Endothelial cell of umbilical vein (primary cell): ENCODE measurements at regions of chr2 and their contacts with region 1.

Region 1: DNA sequence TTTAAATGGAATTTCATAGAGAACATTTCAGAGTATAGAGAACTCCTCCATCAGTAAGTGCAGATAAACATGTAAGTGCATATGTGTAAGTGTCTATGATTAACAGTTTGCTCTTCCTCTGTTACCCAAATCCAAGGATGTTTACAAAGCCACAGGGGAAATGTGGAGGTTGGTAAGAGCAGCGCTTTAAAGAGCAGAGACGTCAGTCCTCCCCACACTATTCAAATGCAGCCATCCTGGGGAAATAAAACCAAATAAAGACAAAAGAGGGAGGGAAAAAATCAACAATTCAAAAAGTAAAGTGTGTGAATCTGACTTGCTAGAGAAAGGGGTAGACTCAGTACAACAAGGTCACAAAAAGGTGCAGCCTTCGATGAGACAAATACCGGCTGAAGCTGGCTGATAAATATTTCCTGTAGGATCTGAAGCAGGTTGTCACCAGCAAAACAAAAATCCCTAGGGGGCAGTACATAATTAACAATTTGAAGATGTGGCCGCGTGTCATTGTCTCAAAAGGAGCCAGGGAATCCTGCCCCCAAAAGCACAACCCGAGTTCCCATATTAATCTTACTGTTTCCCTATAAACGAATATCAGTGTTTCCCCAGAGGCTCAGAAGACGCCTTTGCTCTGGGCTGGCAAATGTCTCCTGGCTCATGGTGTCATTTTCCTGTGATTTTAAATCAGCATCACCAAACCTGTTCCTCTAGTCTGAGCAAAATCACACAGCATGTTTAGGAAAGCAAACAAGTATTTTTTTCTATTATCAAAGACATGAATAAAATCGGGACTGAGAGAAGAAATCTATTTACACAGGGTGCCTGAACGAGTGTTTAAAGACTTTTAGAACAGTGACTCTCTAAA is 216.6 kb downstream of the CDCA7 start:
- DNase-seq: peak; percentile 43
- H3K4me3 ChIP-seq: no peak overlapping the region
- H3K27ac ChIP-seq: no peak overlapping the region
- H3K4me1 ChIP-seq: peaks cover 13% of the 10 kb centered on the region
- H3K27me3 ChIP-seq: no peaks in the 10 kb centered on the region
- CTCF ChIP-seq: peak; percentile 5 to 23
- POLR2A ChIP-seq: no peak

Region 2: DNA sequence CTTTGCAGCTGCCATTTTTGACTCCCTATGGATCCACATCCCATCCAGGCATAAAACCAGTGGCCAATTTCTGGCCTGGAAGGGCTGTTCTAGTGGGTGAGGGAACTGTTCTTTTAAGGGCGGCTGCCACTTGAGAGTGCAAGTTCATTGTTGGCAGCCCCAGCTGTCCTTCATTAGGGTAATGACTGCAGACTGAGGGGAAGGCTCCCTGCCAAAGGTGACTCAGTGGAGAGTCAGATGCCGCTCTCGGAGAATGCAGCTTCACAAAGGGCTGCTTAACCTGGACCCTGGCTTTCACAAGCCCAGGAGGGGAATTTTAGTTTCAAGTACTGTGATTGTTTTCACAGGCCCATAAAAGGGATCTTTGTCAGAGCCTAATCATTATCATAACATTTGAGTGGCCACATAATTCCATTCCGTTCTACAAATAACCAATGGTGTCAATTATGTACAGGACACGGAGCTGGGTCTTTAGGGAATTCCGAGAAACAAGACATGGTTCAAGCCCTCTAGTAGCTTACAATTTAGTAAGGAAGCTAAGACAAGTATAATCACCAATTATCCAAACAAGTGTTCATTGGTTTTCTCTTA is 19.1 kb after region 1 on chr2:
- CTCF ChIA-PET with region 1: interaction called, 4 read pairs
- POLR2A ChIA-PET with region 1: no interaction called
- dilution Hi-C with region 1: no loop called
- intact Hi-C with region 1: loop called (anchors 1 kb)
- DNase-seq: peak; percentile 90
- H3K4me3 ChIP-seq: peak overlapping the region in 1 of 3 experiments; percentile 5
- H3K27ac ChIP-seq: peak overlapping the region; percentile 62
- H3K4me1 ChIP-seq: peaks cover 23% of the 10 kb centered on the region
- H3K27me3 ChIP-seq: no peaks in the 10 kb centered on the region
- CTCF ChIP-seq: no peak
- POLR2A ChIP-seq: no peak

Region 3: GRCh38 chr2:173749315-173749714 is 178.1 kb after region 1 on chr2:
- CTCF ChIA-PET with region 1: interaction called, 5 read pairs
- POLR2A ChIA-PET with region 1: no interaction called
- dilution Hi-C with region 1: no loop called
- intact Hi-C with region 1: loop called (anchors 1 kb)
- DNase-seq: peak; percentile 8
- H3K4me3 ChIP-seq: no peak overlapping the region
- H3K27ac ChIP-seq: no peak overlapping the region
- H3K4me1 ChIP-seq: no peaks in the 10 kb centered on the region
- H3K27me3 ChIP-seq: peaks cover 4 to 10% of the 10 kb centered on the region in 2 experiments
- CTCF ChIP-seq: no peak
- POLR2A ChIP-seq: no peak

Region 4: DNA sequence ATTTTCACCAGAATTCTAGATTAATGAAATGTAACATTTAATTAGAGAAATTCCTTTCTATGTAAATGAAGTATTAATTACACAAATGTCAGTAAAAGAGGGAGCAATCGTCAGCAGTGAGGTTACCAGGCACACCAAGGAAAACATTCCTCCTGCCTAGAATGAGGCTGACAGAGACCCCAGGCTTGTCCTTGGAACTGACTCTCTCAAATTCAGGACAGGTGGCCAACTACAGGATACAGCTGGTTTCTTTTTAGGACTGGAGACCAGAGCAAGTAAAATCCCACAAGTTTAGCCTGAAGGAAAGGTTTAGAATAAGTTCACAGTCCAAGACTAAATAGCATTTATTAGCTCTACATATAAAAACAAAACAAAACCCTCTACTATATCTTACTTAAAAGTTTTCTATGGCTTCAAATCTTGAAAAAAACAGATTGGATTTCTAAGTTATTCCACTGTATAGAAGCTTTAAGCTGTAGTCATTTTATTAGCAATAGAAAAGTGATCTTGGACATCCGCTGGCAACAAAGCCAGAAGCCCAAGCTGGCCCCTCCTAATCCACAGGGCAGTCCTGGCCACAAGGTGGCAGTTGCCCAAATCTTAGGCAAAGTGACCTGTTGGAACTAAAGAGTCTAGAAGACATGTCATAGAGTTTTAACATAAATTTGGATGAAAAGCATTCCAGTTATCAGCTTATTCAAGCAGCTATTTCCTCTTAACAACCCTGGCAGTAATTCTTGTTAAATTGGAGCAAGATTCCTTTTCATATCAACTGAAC is 313.0 kb after region 1 on chr2:
- CTCF ChIA-PET with region 1: no interaction called
- POLR2A ChIA-PET with region 1: no interaction called
- dilution Hi-C with region 1: no loop called
- intact Hi-C with region 1: loop called (anchors 2 kb)
- DNase-seq: peak; percentile 64
- H3K4me3 ChIP-seq: no peak overlapping the region
- H3K27ac ChIP-seq: no peak overlapping the region
- H3K4me1 ChIP-seq: no peaks in the 10 kb centered on the region
- H3K27me3 ChIP-seq: peaks cover 19 to 24% of the 10 kb centered on the region in 2 experiments
- CTCF ChIP-seq: peak; percentile 68 to 70
- POLR2A ChIP-seq: no peak

Region 5: DNA sequence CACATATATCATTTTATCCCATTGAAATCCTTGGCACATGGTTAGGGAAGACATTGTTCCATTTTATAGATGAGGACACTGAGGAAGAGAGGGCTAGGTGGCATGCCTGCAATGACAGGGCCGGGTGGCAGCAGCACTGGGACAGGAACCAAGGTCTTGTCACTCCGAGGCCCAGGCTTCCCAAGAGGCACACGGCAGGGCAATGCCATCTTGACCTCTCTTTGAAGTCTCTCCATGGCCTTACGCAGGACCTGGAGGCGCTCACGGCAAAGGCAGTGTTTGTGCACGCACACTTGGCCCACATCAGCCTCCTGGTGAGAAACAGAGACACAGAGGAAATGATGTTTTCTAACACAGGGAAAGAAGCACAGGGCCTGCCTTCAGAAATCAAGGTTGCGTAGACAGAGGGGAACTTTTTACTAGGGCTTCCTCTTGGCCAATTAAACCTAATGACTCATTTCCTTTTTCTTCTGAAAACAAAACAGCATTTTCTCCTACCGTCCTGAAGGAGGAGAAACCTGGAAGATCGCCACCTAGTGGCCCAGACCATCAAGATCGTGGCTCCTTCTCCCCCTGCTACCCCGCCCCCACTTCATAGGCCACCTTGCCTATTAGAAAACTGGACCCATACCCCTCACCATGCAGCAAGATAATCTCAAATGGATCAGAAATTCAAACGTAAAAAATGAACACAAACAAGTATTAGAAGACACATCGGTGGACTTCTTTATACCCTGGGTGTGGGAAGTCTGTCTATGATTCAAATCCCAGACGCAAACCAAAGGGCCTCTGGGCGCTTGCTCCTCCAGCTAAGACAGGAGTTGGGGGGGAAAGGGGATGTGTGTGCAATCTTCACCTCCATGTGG is 468.5 kb after region 1 on chr2:
- CTCF ChIA-PET with region 1: no interaction called
- POLR2A ChIA-PET with region 1: no interaction called
- dilution Hi-C with region 1: no loop called
- intact Hi-C with region 1: loop called (anchors 1 kb)
- DNase-seq: peak; percentile 97
- H3K4me3 ChIP-seq: no peak overlapping the region
- H3K27ac ChIP-seq: peak overlapping the region; percentile 67
- H3K4me1 ChIP-seq: peaks cover 16% of the 10 kb centered on the region
- H3K27me3 ChIP-seq: no peaks in the 10 kb centered on the region
- CTCF ChIP-seq: peak; percentile 86 to 93
- POLR2A ChIP-seq: no peak

Region 6: GRCh38 chr2:174059178-174059874 is 488.1 kb after region 1 on chr2:
- CTCF ChIA-PET with region 1: no interaction called
- POLR2A ChIA-PET with region 1: no interaction called
- dilution Hi-C with region 1: no loop called
- intact Hi-C with region 1: loop called (anchors 5 kb)
- DNase-seq: peak; percentile 96
- H3K4me3 ChIP-seq: no peak overlapping the region
- H3K27ac ChIP-seq: peak overlapping the region; percentile 65
- H3K4me1 ChIP-seq: peaks cover 15% of the 10 kb centered on the region
- H3K27me3 ChIP-seq: peaks cover 0 to 2% of the 10 kb centered on the region in 2 experiments
- CTCF ChIP-seq: no peak
- POLR2A ChIP-seq: no peak